Naive thymus-derived CD4-positive, alpha-beta T cell (primary cell): ENCODE measurements at regions of chr11 and their contacts with region 1.

Region 1: GRCh38 chr11:47176328-47177228 is at the start of gene ARFGAP2:
- DNase-seq: peak; percentile 92 to 98 (median 96)
- ATAC-seq: peak; percentile 94
- H3K4me3 ChIP-seq: peak within 1 kb of the TSS; percentile 97
- H3K4me3 Mint-ChIP-seq: peak within 1 kb of the TSS; percentile 92 to 99 (median 98)
- H3K27ac ChIP-seq: peak within 1 kb of the TSS; percentile 97
- H3K27ac Mint-ChIP-seq: peak within 1 kb of the TSS; percentile 97 to 100 (median 99)
- H3K4me1 ChIP-seq: peaks cover 19 to 31% of the 10 kb centered on the region in 2 donors
- H3K4me1 Mint-ChIP-seq: peaks cover 19 to 60% (median 45%) of the 10 kb centered on the region in 7 donors
- H3K27me3 ChIP-seq: no peaks in the 10 kb centered on the region
- H3K27me3 Mint-ChIP-seq: no peaks in the 10 kb centered on the region
- total RNA-seq, gene ARFGAP2: 107 to 220 (median 155) TPM

Region 2: DNA sequence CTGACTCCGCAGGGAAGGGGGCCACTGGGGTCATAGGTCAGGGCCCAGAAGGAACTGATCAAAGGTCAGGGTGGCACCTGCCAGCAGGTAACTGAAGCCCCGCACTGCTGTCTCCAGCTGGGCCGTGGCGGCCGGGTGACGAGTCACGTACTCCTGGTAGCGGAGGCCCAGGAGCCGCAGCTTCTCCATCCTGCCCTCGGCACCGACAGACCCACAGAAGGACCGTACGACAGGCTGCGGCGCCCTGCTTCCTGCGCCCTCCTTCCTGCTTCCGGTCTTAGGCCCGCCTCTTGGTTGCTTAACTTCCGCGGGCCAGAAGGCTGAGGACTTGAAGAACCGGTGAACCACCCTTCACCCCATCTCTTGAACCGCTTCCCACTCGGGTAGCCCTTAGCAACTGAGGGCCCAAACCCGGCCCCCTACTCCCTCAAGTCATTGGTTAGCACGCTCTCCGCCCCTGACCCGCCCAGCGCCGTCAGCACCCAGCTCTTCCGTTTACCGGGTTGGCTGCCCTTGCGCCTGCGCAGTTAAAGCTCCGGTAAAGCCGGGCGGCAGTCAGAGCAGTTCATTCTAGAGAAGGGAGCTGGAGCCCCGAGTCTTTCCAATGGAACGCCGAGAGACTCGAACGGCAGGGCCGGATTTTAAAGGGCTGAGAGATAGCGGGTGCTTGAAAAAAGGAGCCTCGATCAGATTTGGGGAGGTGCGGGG is 1258.8 kb before region 1 on chr11 and contains the start of gene PEX16:
- CTCF ChIA-PET with region 1: no interaction called
- POLR2A ChIA-PET with region 1: no interaction called
- intact Hi-C with region 1: loop called in 1 of 2 experiments (anchors 5 kb)
- DNase-seq: peak; percentile 86 to 98 (median 97)
- ATAC-seq: peak; percentile 95
- H3K4me3 ChIP-seq: peak within 1 kb of the TSS; percentile 72
- H3K4me3 Mint-ChIP-seq: peak within 1 kb of the TSS; percentile 86 to 98 (median 96)
- H3K27ac ChIP-seq: peak within 1 kb of the TSS; percentile 87
- H3K27ac Mint-ChIP-seq: peak within 1 kb of the TSS; percentile 91 to 100 (median 98)
- H3K4me1 ChIP-seq: peaks cover 24 to 36% of the 10 kb centered on the region in 2 donors
- H3K4me1 Mint-ChIP-seq: peaks cover 31 to 66% (median 49%) of the 10 kb centered on the region in 7 donors
- H3K27me3 ChIP-seq: no peaks in the 10 kb centered on the region
- H3K27me3 Mint-ChIP-seq: peaks cover 0 to 13% (median 4%) of the 10 kb centered on the region in 5 donors
- total RNA-seq, gene PEX16: 48.2 to 64.3 (median 58.1) TPM

Region 3: GRCh38 chr11:46700241-46701077 is 476.1 kb before region 1 on chr11 and contains the starts of genes ARHGAP1 and ZNF408:
- CTCF ChIA-PET with region 1: no interaction called
- POLR2A ChIA-PET with region 1: no interaction called
- intact Hi-C with region 1: loop called (anchors 1 kb)
- DNase-seq: peak; percentile 94 to 99 (median 99)
- ATAC-seq: peak; percentile 99
- H3K4me3 ChIP-seq: peak within 1 kb of the TSS; percentile 95
- H3K4me3 Mint-ChIP-seq: peak within 1 kb of the TSS; percentile 91 to 100 (median 99)
- H3K27ac ChIP-seq: peak within 1 kb of the TSS; percentile 75
- H3K27ac Mint-ChIP-seq: peak within 1 kb of the TSS; percentile 82 to 98 (median 96)
- H3K4me1 ChIP-seq: peaks cover 33 to 38% of the 10 kb centered on the region in 2 donors
- H3K4me1 Mint-ChIP-seq: peaks cover 40 to 71% (median 54%) of the 10 kb centered on the region in 7 donors
- H3K27me3 ChIP-seq: no peaks in the 10 kb centered on the region
- H3K27me3 Mint-ChIP-seq: peaks cover 0 to 5% (median 0%) of the 10 kb centered on the region in 5 donors
- total RNA-seq, gene ARHGAP1: 44.6 to 82.5 (median 64.6) TPM
- total RNA-seq, gene ZNF408: 7.8 to 20.0 (median 16.6) TPM

Region 4: GRCh38 chr11:46987183-46987582 is 189.4 kb before region 1 on chr11:
- CTCF ChIA-PET with region 1: no interaction called
- POLR2A ChIA-PET with region 1: no interaction called
- intact Hi-C with region 1: no loop called
- DNase-seq: no peak
- ATAC-seq: no peak
- H3K4me3 ChIP-seq: no peak overlapping the region
- H3K4me3 Mint-ChIP-seq: no peak overlapping the region
- H3K27ac ChIP-seq: no peak overlapping the region
- H3K27ac Mint-ChIP-seq: peak overlapping the region in 1 of 9 donors; percentile 19
- H3K4me1 ChIP-seq: no peaks in the 10 kb centered on the region
- H3K4me1 Mint-ChIP-seq: peaks cover 0 to 8% (median 4%) of the 10 kb centered on the region in 7 donors
- H3K27me3 ChIP-seq: no peaks in the 10 kb centered on the region
- H3K27me3 Mint-ChIP-seq: peaks cover 0 to 8% (median 0%) of the 10 kb centered on the region in 5 donors

Region 5: DNA sequence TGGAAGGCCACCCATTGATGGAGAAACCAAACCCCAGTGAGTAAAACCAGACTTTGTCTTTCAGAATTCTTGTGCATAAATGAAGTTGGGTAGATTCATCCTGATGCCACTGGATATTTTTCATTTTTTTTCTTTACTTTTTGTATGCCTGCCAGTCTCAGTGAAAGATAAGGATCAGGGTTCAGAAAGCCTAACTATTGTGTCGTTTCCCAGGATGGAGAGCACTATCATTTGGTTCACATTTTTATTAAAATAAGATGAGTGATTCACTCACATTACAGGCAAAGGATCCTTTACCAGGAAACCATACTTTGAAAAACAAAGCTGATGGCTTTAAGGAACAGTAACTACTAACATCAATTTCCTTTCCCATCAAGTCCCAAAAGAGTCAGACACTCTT is 51.9 kb before region 1 on chr11:
- CTCF ChIA-PET with region 1: no interaction called
- POLR2A ChIA-PET with region 1: no interaction called
- intact Hi-C with region 1: no loop called
- DNase-seq: no peak
- ATAC-seq: no peak
- H3K4me3 ChIP-seq: no peak overlapping the region
- H3K4me3 Mint-ChIP-seq: no peak overlapping the region
- H3K27ac ChIP-seq: no peak overlapping the region
- H3K27ac Mint-ChIP-seq: no peak overlapping the region
- H3K4me1 ChIP-seq: no peaks in the 10 kb centered on the region
- H3K4me1 Mint-ChIP-seq: peaks cover 0 to 4% (median 0%) of the 10 kb centered on the region in 7 donors
- H3K27me3 ChIP-seq: no peaks in the 10 kb centered on the region
- H3K27me3 Mint-ChIP-seq: no peaks in the 10 kb centered on the region

Region 6: DNA sequence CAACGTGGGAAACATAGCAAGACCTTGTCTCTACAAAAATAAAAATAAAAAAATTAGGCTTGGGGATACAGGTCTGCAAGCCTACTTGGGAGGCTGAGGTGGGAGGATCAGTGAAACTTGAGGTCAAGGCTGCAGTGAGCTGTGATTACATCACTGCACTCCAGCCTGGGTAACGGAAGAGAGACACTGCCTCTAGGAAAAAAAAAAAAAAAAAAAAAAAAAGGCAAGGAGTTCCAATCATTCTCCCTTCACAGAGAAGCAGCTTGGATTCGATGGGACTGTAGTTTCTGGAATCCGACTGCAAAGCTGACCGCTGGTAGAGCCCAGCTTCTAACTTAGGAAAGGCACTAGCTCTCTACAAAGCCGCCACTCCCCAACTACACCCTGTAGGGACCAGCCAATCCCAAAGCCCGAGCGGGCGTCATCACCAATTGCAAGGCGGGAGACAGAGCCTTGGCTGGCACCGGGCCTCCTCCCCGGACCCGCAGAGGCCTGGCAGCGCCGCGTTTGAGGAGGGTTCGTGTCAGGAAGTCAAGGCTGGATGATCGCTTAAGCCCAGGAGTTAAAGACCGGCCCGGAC is 37.5 kb after region 1 on chr11:
- CTCF ChIA-PET with region 1: interaction called, 9 read pairs
- POLR2A ChIA-PET with region 1: interaction called, 48 read pairs
- intact Hi-C with region 1: loop called (anchors 1 kb)
- DNase-seq: peak; percentile 64 to 85 (median 76)
- ATAC-seq: peak; percentile 86
- H3K4me3 ChIP-seq: peak overlapping the region; percentile 89
- H3K4me3 Mint-ChIP-seq: peak overlapping the region; percentile 92 to 100 (median 96)
- H3K27ac ChIP-seq: peak overlapping the region; percentile 85
- H3K27ac Mint-ChIP-seq: peak overlapping the region; percentile 96 to 100 (median 99)
- H3K4me1 ChIP-seq: peaks cover 3 to 21% of the 10 kb centered on the region in 2 donors
- H3K4me1 Mint-ChIP-seq: peaks cover 26 to 39% (median 32%) of the 10 kb centered on the region in 7 donors
- H3K27me3 ChIP-seq: no peaks in the 10 kb centered on the region
- H3K27me3 Mint-ChIP-seq: no peaks in the 10 kb centered on the region

Region 7: GRCh38 chr11:47354913-47355282 is 178.3 kb after region 1 on chr11:
- CTCF ChIA-PET with region 1: no interaction called
- POLR2A ChIA-PET with region 1: no interaction called
- intact Hi-C with region 1: loop called in 1 of 2 experiments (anchors 5 kb)
- DNase-seq: no peak
- ATAC-seq: no peak
- H3K4me3 ChIP-seq: no peak overlapping the region
- H3K4me3 Mint-ChIP-seq: no peak overlapping the region
- H3K27ac ChIP-seq: no peak overlapping the region
- H3K27ac Mint-ChIP-seq: peak overlapping the region in 1 of 9 donors; percentile 16
- H3K4me1 ChIP-seq: peaks cover 0 to 5% of the 10 kb centered on the region in 2 donors
- H3K4me1 Mint-ChIP-seq: peaks cover 0 to 10% (median 8%) of the 10 kb centered on the region in 7 donors
- H3K27me3 ChIP-seq: no peaks in the 10 kb centered on the region
- H3K27me3 Mint-ChIP-seq: no peaks in the 10 kb centered on the region

Region 8: DNA sequence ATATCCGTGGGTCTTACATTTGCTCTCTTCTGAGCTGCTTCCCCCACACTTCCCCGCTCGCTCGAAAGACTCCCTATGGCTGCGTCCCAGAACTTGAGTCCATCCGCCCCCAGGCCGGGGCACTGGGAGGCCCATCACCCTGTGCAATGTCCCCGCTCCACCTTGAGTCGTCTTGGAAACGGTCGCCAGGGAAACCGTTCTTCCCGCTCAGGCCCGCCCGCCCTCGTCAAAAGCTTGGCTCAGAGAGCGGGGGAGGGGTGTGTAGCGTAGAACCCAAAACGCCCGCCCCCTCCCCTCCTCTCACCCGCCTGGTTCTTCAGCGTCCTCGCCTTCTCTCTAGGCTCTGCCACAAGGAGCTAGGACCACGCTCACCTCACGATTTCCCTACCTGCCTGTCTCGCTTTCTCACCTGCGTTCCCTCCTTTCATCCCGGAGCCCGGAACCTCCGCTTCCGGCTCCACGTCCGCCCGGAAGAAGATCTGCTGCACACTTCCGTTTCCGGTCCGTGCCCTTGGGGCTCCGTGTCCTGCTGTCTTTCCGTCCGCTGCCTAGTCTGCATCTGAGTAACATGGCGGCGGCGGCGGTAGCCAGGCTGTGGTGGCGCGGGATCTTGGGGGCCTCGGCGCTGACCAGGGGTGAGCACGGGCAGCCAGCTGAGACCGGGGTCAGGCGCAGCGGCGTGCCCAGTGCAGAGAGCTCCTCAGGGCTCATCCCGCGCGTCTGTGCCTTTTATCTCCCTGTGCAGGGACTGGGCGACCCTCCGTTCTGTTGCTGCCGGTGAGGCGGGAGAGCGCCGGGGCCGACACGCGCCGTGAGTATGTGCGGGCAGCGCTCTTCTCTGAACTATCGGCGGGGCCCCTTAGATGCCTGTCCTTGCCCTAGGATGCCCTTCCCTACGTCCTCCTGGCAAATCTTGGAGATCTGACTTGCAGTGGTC is 402.2 kb after region 1 on chr11 and contains the starts of genes KBTBD4 and NDUFS3:
- CTCF ChIA-PET with region 1: no interaction called
- POLR2A ChIA-PET with region 1: interaction called, 4 read pairs
- intact Hi-C with region 1: loop called in 1 of 2 experiments (anchors 1 kb)
- DNase-seq: peak; percentile 85 to 95 (median 88)
- ATAC-seq: peak; percentile 97
- H3K4me3 ChIP-seq: peak within 1 kb of the TSS; percentile 95
- H3K4me3 Mint-ChIP-seq: peak within 1 kb of the TSS; percentile 95 to 100 (median 99)
- H3K27ac ChIP-seq: peak within 1 kb of the TSS; percentile 80
- H3K27ac Mint-ChIP-seq: peak within 1 kb of the TSS; percentile 97 to 100 (median 99)
- H3K4me1 ChIP-seq: peaks cover 26 to 28% of the 10 kb centered on the region in 2 donors
- H3K4me1 Mint-ChIP-seq: peaks cover 17 to 51% (median 41%) of the 10 kb centered on the region in 7 donors
- H3K27me3 ChIP-seq: no peaks in the 10 kb centered on the region
- H3K27me3 Mint-ChIP-seq: no peaks in the 10 kb centered on the region
- total RNA-seq, gene KBTBD4: 15.0 to 26.5 (median 20.9) TPM
- total RNA-seq, gene NDUFS3: 68.6 to 116 (median 85.2) TPM